Naive thymus-derived CD4-positive, alpha-beta T cell (primary cell): ENCODE measurements at regions of chr3 and their contacts with region 1.

Region 1: GRCh38 chr3:187870360-187871203 is 125.3 kb upstream of the BCL6 start:
- DNase-seq: peak in 1 of 9 donors; percentile 27
- ATAC-seq: no peak
- H3K4me3 ChIP-seq: no peak overlapping the region
- H3K4me3 Mint-ChIP-seq: no peak overlapping the region
- H3K27ac ChIP-seq: no peak overlapping the region
- H3K27ac Mint-ChIP-seq: peak overlapping the region in 1 of 9 donors; percentile 1
- H3K4me1 ChIP-seq: no peaks in the 10 kb centered on the region
- H3K4me1 Mint-ChIP-seq: peaks cover 0 to 21% (median 0%) of the 10 kb centered on the region in 7 donors
- H3K27me3 ChIP-seq: no peaks in the 10 kb centered on the region
- H3K27me3 Mint-ChIP-seq: no peaks in the 10 kb centered on the region

Region 2: DNA sequence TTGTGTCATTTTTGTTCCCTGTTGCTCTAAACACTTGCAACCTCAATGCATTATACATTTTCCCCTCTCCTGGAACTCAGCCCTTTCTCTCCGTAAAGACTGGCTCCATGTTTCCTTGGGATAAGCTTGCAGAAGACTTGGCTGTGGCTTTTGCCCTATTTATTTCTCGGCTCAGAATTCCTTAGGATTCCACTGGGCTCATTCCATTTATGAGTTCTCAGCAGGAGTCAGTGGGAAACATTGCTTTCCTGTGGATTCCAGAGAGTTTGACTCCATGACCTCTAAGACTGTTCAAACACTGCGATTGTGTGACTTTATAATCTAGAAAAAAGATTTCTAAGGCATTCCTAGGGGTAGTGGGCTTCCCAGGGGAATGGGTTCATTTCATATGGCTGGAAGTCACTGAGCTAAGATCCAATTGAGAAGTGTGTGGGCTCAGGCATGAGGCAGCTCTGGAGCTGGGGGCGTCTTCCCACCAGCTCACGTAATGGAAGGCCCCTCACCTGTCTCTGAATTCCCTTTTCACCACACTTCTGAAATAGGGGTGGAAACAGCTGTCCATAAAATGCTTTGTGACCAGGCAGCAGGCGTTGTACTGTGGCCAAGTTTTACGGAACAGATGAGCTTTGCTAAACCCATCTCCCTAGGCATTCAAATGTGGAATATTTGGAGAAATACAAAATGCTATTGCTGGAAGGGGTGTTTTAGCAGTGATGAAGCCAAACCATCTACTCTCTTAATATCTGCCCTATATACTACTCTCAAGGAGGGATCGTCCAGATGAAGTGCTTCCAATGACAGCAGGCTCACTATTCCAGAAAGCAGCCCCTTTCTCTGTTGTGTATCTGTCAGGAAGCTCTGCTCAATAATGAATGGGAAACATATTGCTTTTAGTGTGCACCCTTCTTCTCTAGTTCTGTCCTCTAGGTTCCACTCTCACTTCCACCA is 33.5 kb before region 1 on chr3:
- CTCF ChIA-PET with region 1: no interaction called
- POLR2A ChIA-PET with region 1: no interaction called
- intact Hi-C with region 1: loop called in 1 of 2 experiments (anchors 5 kb)
- DNase-seq: no peak
- ATAC-seq: no peak
- H3K4me3 ChIP-seq: no peak overlapping the region
- H3K4me3 Mint-ChIP-seq: no peak overlapping the region
- H3K27ac ChIP-seq: no peak overlapping the region
- H3K27ac Mint-ChIP-seq: no peak overlapping the region
- H3K4me1 ChIP-seq: no peaks in the 10 kb centered on the region
- H3K4me1 Mint-ChIP-seq: peaks cover 0 to 16% (median 0%) of the 10 kb centered on the region in 7 donors
- H3K27me3 ChIP-seq: no peaks in the 10 kb centered on the region
- H3K27me3 Mint-ChIP-seq: peaks cover 0 to 3% (median 0%) of the 10 kb centered on the region in 5 donors